ENCODE measurements at regions of chr10 and their contacts with region 1.

Region 1: GRCh38 chr10:3239066-3239919 is 66.7 kb upstream of the PITRM1 start:
- DNase-seq: peak; percentile 75 to 86
- H3K4me3 ChIP-seq: no peak overlapping the region
- H3K4me3 Mint-ChIP-seq: no peak overlapping the region
- H3K27ac Mint-ChIP-seq: no peak overlapping the region
- H3K4me1 ChIP-seq: no peaks in the 10 kb centered on the region
- H3K4me1 Mint-ChIP-seq: no peaks in the 10 kb centered on the region
- H3K27me3 ChIP-seq: no peaks in the 10 kb centered on the region
- H3K27me3 Mint-ChIP-seq: peaks cover 6% of the 10 kb centered on the region
- CTCF ChIP-seq: peak; percentile 96 to 99

Region 2: DNA sequence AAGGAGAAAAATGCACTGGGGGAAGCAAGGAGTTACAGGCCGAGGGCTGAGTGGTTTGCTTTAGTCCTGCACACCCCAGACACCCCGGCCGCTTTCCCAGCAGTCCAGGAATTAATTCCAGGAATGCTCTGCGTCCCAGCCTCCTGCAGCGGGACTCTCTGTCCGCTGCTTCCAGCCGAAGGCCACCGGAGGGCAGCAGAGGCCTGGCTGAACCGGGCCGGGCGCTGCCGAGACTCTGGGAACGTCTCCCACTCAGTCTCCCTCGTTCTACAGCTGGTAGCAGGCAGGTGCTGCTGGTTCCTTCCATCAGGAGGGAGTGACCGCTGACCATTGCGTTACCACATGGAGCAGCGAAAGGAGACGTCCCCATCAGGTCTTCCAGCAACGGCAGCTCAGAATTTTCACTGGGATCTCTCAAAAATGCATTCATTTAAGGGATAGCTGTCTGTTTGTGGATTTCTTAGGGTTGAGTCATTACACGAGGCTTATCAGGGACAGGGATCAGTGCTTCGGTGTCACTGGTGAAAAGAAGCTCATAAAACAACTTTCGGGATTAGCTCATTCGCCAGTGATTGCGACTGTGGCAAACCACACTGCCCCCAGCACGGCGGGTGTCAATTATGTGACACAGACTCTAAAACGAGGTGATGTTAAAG is 41.8 kb before region 1 on chr10:
- CTCF ChIA-PET with region 1: interaction called, 3 read pairs
- POLR2A ChIA-PET with region 1: no interaction called
- intact Hi-C with region 1: loop called (anchors 1 kb)
- DNase-seq: peak; percentile 89 to 92
- H3K4me3 ChIP-seq: peak overlapping the region; percentile 9
- H3K4me3 Mint-ChIP-seq: peak overlapping the region; percentile 75
- H3K27ac Mint-ChIP-seq: peak overlapping the region; percentile 66
- H3K4me1 ChIP-seq: no peaks in the 10 kb centered on the region
- H3K4me1 Mint-ChIP-seq: peaks cover 9% of the 10 kb centered on the region
- H3K27me3 ChIP-seq: no peaks in the 10 kb centered on the region; the same call in 1 of the 2 replicates
- H3K27me3 Mint-ChIP-seq: peaks cover 6% of the 10 kb centered on the region
- CTCF ChIP-seq: peak; percentile 92 to 99

Region 3: GRCh38 chr10:4267086-4267773 is 1027.9 kb after region 1 on chr10:
- CTCF ChIA-PET with region 1: no interaction called
- POLR2A ChIA-PET with region 1: no interaction called
- intact Hi-C with region 1: loop called (anchors 1 kb)
- DNase-seq: peak in 1 of 2 experiments; percentile 24
- H3K4me3 ChIP-seq: no peak overlapping the region
- H3K4me3 Mint-ChIP-seq: no peak overlapping the region
- H3K27ac Mint-ChIP-seq: no peak overlapping the region
- H3K4me1 ChIP-seq: no peaks in the 10 kb centered on the region
- H3K4me1 Mint-ChIP-seq: no peaks in the 10 kb centered on the region
- H3K27me3 ChIP-seq: no peaks in the 10 kb centered on the region
- H3K27me3 Mint-ChIP-seq: no peaks in the 10 kb centered on the region
- CTCF ChIP-seq: peak; percentile 35 to 42

Region 4: GRCh38 chr10:4596951-4597350 is 1357.7 kb after region 1 on chr10:
- CTCF ChIA-PET with region 1: no interaction called
- POLR2A ChIA-PET with region 1: no interaction called
- intact Hi-C with region 1: no loop called
- DNase-seq: no peak
- H3K4me3 ChIP-seq: no peak overlapping the region
- H3K4me3 Mint-ChIP-seq: no peak overlapping the region
- H3K27ac Mint-ChIP-seq: no peak overlapping the region
- H3K4me1 ChIP-seq: no peaks in the 10 kb centered on the region
- H3K4me1 Mint-ChIP-seq: no peaks in the 10 kb centered on the region
- H3K27me3 ChIP-seq: 0 out of 2 replicates have a peak, but pooled peaks cover 2% of the 10 kb centered on the region
- H3K27me3 Mint-ChIP-seq: no peaks in the 10 kb centered on the region
- CTCF ChIP-seq: no peak